Activated CD8-positive, alpha-beta T cell treated with anti-CD3 and anti-CD28 coated beads, Interleukin-2, amount 10 ng/mL, durations not matched to agents 7 days and 5 days (primary cell): ENCODE measurements at regions of chr11 and their contacts with region 1.

Region 1: GRCh38 chr11:64448599-64449556 is 89.9 kb downstream of the RPS6KA4 start:
- DNase-seq: peak; percentile 78
- ATAC-seq: peak; percentile 87
- H3K4me3 Mint-ChIP-seq: peak overlapping the region; percentile 66
- H3K27ac Mint-ChIP-seq: no peak overlapping the region
- H3K4me1 Mint-ChIP-seq: peaks cover 20% of the 10 kb centered on the region
- H3K27me3 Mint-ChIP-seq: peaks cover 21% of the 10 kb centered on the region

Region 2: DNA sequence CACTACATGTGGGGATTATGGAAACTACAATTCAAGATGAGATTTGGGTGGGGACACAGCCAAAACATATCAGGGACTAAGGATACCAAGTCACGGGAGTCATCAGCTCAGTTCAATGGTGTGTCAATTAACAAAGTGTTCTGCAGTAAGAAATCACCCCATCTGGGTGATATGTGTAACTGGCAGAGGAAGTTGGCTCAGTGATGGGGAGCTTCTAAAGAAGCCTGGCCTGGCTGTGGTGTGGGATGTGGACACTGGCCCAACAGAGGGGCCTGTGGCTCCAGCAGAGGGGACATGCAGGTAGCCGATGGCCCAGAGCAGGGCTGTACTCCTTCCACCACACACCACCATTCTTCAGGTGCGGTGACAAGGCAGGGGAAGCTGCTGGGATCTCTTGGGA is 58.3 kb before region 1 on chr11:
- CTCF ChIA-PET with region 1: interaction called, 11 read pairs
- POLR2A ChIA-PET with region 1: no interaction called
- DNase-seq: no peak
- ATAC-seq: no peak
- H3K4me3 Mint-ChIP-seq: peak overlapping the region; percentile 31
- H3K27ac Mint-ChIP-seq: peak overlapping the region; percentile 19
- H3K4me1 Mint-ChIP-seq: peaks cover 34% of the 10 kb centered on the region
- H3K27me3 Mint-ChIP-seq: peaks cover 51% of the 10 kb centered on the region

Region 3: DNA sequence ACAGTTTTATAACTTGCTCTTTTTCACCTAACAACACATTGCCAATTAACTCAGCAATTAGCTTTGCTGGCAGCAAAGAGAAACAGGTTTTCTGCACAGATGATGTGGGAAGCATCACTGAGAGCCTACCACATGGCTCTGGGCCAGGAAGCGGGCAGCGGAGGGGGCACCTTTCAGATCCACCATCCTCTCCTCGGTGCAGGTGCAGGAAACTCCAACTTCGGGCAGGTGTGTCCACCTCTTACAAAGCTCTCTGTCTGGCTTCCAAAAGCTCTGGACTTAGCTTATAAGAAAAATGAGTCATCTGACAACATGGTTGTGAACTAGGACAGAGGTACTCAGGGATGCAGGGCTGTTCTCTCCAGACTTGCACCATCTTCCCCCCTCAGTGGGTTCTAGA is 12.9 kb before region 1 on chr11:
- CTCF ChIA-PET with region 1: interaction called, 16 read pairs
- POLR2A ChIA-PET with region 1: interaction called, 3 read pairs
- DNase-seq: no peak
- ATAC-seq: no peak
- H3K4me3 Mint-ChIP-seq: no peak overlapping the region
- H3K27ac Mint-ChIP-seq: no peak overlapping the region
- H3K4me1 Mint-ChIP-seq: no peaks in the 10 kb centered on the region
- H3K27me3 Mint-ChIP-seq: peaks cover 15% of the 10 kb centered on the region

Region 4: GRCh38 chr11:64489831-64490441 is 41.1 kb after region 1 on chr11:
- CTCF ChIA-PET with region 1: interaction called, 11 read pairs
- POLR2A ChIA-PET with region 1: no interaction called
- DNase-seq: peak; percentile 58
- ATAC-seq: peak; percentile 70
- H3K4me3 Mint-ChIP-seq: no peak overlapping the region
- H3K27ac Mint-ChIP-seq: no peak overlapping the region
- H3K4me1 Mint-ChIP-seq: no peaks in the 10 kb centered on the region
- H3K27me3 Mint-ChIP-seq: peaks cover 16% of the 10 kb centered on the region

Region 5: GRCh38 chr11:64688534-64688982 is 239.7 kb after region 1 on chr11:
- CTCF ChIA-PET with region 1: interaction called, 13 read pairs
- POLR2A ChIA-PET with region 1: no interaction called
- DNase-seq: peak; percentile 94
- ATAC-seq: peak; percentile 99
- H3K4me3 Mint-ChIP-seq: peak overlapping the region; percentile 38
- H3K27ac Mint-ChIP-seq: no peak overlapping the region
- H3K4me1 Mint-ChIP-seq: peaks cover 19% of the 10 kb centered on the region
- H3K27me3 Mint-ChIP-seq: peaks cover 29% of the 10 kb centered on the region